ENCODE measurements at regions of chr12 and their contacts with region 1.

Region 1: GRCh38 chr12:25328072-25328712 is 77.5 kb upstream of the KRAS start:
- DNase-seq: no peak
- ATAC-seq: no peak
- H3K4me3 ChIP-seq: no peak overlapping the region
- H3K27ac ChIP-seq: no peak overlapping the region
- H3K4me1 ChIP-seq: peaks cover 0 to 3% of the 10 kb centered on the region in 2 donors
- H3K27me3 ChIP-seq: no peaks in the 10 kb centered on the region

Region 2: DNA sequence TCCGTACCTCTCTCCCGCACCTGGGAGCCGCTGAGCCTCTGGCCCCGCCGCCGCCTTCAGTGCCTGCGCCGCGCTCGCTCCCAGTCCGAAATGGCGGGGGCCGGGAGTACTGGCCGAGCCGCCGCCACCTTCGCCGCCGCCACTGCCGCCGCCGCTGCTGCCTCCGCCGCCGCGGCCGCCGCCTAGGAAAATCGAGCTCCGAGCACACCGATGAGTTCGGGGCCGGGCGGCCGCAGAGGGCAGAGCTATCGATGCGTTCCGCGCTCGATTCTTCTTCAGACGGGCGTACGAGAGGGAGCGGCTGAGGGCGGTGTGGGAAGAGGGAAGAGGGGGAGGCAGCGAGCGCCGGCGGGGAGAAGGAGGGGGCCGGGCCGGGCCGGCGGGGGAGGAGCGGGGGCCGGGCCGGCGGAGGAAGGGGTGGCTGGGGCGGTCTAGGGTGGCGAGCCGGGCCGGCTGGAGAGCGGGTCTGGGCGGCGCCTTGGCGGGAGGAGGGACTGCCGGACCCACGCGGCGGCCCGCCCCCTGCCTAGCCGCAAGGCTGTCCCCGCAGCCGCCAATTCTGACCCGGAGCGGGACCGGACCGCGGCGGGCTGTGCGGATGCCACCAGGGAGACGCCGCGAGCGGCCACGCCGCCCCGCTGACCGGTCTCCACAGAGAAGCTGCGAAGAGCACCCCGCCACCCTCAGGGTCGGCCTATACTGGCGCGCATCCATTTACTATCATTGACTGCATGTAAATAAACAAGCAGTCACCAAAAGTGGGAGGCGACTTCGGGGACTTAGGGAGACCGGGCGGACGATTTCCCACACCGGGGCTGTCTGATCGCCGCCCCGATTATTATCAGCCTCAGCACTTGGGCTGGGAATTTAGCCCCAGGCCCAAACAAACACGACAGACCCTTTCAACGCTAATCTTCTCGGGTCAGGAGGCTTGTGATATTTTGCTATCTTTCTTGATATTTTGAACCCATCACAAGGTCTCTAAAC is 77.2 kb before region 1 on chr12 and contains the start of gene KRAS:
- intact Hi-C with region 1: loop called (anchors 5 kb)
- DNase-seq: peak; percentile 99
- ATAC-seq: peak; percentile 98
- H3K4me3 ChIP-seq: peak within 1 kb of the TSS; percentile 99 to 100
- H3K27ac ChIP-seq: peak within 1 kb of the TSS; percentile 84 to 95
- H3K4me1 ChIP-seq: peaks cover 2 to 3% of the 10 kb centered on the region in 2 donors
- H3K27me3 ChIP-seq: no peaks in the 10 kb centered on the region
- total RNA-seq, gene KRAS: 21.8 to 29.7 TPM

Region 3: DNA sequence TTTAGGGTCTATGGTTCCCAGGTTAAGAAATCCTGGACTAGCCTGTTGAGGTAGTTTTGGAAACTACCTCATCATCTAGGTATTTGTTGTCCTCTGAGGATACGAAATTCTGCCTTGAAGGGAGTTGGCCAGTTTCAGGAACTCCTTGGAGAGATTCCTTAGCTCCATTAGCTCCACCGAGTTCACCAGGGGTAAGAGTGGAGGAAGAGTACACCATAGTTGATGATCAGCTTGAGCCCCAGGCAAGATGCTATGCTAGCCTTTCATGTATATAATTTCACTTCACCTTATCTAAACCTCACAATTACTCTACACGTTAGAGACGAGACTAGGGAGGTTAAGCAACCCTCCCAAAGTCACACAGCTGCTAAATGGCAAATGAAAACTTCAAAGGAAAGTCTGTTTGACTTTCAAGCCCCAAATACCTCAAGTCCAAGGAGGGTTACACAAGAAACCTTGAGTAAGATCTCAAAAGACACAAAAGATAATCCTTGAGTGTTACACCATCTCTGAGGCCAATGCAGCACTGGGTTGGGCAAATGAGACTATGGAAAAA is 19.6 kb after region 1 on chr12:
- intact Hi-C with region 1: loop called in 1 of 2 experiments (anchors 1 kb)
- DNase-seq: no peak
- ATAC-seq: no peak
- H3K4me3 ChIP-seq: no peak overlapping the region
- H3K27ac ChIP-seq: no peak overlapping the region
- H3K4me1 ChIP-seq: no peaks in the 10 kb centered on the region
- H3K27me3 ChIP-seq: no peaks in the 10 kb centered on the region

Region 4: DNA sequence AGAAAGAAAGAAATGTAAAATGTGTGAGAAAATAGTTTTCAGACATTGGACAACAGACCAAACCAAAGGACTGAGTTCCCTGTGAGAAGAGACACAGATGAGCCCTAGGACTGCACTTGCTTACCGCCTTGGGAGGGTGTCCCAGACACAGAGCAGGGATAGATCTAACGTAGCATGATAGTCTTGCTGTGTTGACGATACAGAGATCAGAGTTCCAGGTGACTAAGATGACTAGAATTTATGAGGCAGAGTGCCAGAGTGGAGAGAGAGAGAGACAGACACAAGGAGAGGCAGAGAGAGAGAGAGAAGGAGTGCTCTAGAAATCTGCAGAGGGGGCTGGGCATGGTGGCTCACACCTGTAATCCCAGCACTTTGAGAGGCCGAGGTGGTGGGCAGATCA is 373.1 kb after region 1 on chr12:
- intact Hi-C with region 1: no loop called
- DNase-seq: no peak
- ATAC-seq: no peak
- H3K4me3 ChIP-seq: no peak overlapping the region
- H3K27ac ChIP-seq: no peak overlapping the region
- H3K4me1 ChIP-seq: peaks cover 0 to 2% of the 10 kb centered on the region in 2 donors
- H3K27me3 ChIP-seq: no peaks in the 10 kb centered on the region

Region 5: GRCh38 chr12:25713264-25713663 is 385.1 kb after region 1 on chr12:
- intact Hi-C with region 1: no loop called
- DNase-seq: no peak
- ATAC-seq: no peak
- H3K4me3 ChIP-seq: no peak overlapping the region
- H3K27ac ChIP-seq: no peak overlapping the region
- H3K4me1 ChIP-seq: no peaks in the 10 kb centered on the region
- H3K27me3 ChIP-seq: peaks cover 0 to 4% of the 10 kb centered on the region in 2 donors